Activated naive CD4-positive, alpha-beta T cell treated with anti-CD3 and anti-CD28 coated beads for 36 hours (primary cell): ENCODE measurements at regions of chr6 and their contacts with region 1.

Region 1: DNA sequence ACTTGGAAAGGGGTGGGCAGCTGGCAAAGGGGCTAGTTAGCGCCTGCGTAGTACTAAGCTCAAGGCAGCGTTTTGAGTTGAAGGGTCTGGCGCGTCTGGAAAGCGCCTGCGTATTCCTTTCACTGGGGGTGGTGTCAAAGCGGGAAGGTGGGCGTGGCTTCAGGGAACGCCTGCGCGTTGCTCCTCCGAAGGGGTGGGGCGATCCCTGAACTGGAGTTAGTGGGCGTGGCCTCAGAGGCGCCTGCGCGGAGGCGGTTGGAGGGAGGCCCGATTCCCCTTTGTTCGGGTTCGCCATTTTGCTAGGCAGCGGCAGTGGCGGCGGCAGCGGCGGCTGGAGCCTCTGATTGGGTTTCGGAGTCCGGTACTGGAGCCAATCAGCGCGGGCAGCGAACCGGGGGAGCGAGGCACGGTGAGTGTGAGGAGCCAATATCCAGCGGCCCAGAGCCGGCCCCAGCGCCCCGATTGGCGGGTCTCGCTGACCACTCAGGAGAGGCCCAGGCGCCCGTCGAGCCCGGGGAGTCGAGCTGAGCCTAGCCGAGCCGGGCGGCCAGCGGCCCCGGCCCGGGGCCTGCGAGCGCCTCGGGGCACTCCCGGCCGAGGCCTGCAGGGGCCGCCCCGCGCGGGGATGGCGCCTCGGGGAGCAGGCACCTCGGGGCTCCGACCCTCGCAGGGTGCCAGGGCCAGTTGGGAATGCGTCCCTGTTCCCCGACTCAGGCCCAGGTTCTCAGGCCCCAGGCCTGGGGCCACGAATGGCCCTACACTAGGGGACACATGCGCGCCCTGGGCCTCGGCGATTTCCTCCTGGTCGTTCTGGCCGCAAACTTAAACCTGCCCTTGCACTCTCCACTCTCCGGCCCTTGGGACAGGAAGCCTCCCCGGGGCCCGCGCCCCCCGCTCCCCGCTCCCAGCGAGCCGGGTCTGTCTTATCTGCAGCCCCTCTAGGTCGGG is at the start of gene NFYA:
- DNase-seq: peak; percentile 100
- H3K4me3 Mint-ChIP-seq: peak within 1 kb of the TSS; percentile 93
- H3K27ac Mint-ChIP-seq: peak within 1 kb of the TSS; percentile 98
- H3K4me1 Mint-ChIP-seq: peaks cover 50% of the 10 kb centered on the region
- H3K27me3 Mint-ChIP-seq: no peaks in the 10 kb centered on the region
- total RNA-seq, gene NFYA: 38.0 to 38.7 TPM

Region 2: GRCh38 chr6:39228992-39229767 is 1843.8 kb before region 1 on chr6 and contains the start of gene KCNK5:
- CTCF ChIA-PET with region 1: no interaction called
- intact Hi-C with region 1: loop called (anchors 1 kb)
- DNase-seq: peak; percentile 89
- H3K4me3 Mint-ChIP-seq: peak within 1 kb of the TSS; percentile 87
- H3K27ac Mint-ChIP-seq: peak within 1 kb of the TSS; percentile 87
- H3K4me1 Mint-ChIP-seq: peaks cover 44% of the 10 kb centered on the region
- H3K27me3 Mint-ChIP-seq: peaks cover 1% of the 10 kb centered on the region
- total RNA-seq, gene KCNK5: 9.0 to 9.2 TPM

Region 3: DNA sequence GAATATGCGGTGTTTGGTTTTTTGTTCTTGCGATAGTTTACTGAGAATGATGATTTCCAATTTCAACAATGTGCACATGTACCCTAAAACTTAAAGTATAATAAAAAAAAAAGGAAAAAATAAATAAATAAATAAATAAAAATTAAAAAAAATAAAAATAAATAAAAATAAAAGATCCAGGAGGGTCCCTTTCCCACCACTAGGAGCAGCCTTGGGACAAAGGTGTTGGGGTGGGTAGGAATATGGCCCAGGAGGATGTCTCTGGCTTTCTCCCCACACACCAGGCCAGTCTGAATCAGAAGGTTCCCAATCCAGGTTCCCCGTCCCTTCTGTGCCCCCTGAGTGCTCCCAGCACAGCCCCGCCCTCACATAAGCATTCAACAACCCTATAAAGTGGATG is 495.3 kb before region 1 on chr6:
- CTCF ChIA-PET with region 1: no interaction called
- intact Hi-C with region 1: no loop called
- DNase-seq: no peak
- H3K4me3 Mint-ChIP-seq: no peak overlapping the region
- H3K27ac Mint-ChIP-seq: no peak overlapping the region
- H3K4me1 Mint-ChIP-seq: no peaks in the 10 kb centered on the region
- H3K27me3 Mint-ChIP-seq: no peaks in the 10 kb centered on the region

Region 4: GRCh38 chr6:41182069-41183034 is 109.4 kb after region 1 on chr6:
- CTCF ChIA-PET with region 1: interaction called, 6 read pairs
- intact Hi-C with region 1: loop called (anchors 1 kb)
- DNase-seq: peak; percentile 74
- H3K4me3 Mint-ChIP-seq: no peak overlapping the region
- H3K27ac Mint-ChIP-seq: no peak overlapping the region
- H3K4me1 Mint-ChIP-seq: peaks cover 24% of the 10 kb centered on the region
- H3K27me3 Mint-ChIP-seq: no peaks in the 10 kb centered on the region

Region 5: DNA sequence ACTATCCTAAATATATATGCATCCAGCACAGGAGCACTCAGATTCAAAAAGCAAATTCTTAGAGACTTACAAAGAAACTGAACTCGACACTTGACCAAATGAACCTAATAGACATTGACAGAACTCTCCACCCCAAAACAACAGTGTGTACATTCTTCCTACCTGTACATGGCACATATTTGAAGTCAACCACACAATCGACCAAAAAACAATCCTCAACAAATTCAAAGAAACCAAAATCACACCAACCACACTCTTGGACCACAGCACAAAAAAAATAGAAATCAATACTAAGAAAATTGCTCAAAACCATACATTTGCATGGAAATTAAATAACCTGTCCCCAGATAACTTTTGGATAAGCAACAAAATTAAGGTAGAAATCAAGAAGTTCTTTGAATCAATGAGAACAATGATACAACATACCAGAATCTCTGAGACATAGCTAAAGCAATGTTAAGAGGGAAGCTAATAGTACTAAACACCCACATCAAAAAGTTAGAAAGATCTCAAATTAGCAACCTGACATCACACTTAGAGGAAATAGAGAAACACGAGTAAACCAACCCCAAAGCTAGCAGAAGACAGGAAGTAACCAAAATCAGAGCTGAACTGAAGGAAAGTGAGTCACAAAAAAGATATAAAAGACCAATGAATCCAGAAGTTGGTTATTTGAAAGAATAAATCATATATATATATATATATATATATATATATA is 226.0 kb after region 1 on chr6:
- CTCF ChIA-PET with region 1: interaction called, 3 read pairs
- intact Hi-C with region 1: loop called (anchors 2 kb)
- DNase-seq: no peak
- H3K4me3 Mint-ChIP-seq: peak overlapping the region; percentile 66
- H3K27ac Mint-ChIP-seq: peak overlapping the region; percentile 91
- H3K4me1 Mint-ChIP-seq: peaks cover 76% of the 10 kb centered on the region
- H3K27me3 Mint-ChIP-seq: no peaks in the 10 kb centered on the region

Region 6: GRCh38 chr6:41531591-41532582 is 458.9 kb after region 1 on chr6:
- CTCF ChIA-PET with region 1: no interaction called
- intact Hi-C with region 1: loop called (anchors 1 kb)
- DNase-seq: peak; percentile 87
- H3K4me3 Mint-ChIP-seq: peak overlapping the region; percentile 73
- H3K27ac Mint-ChIP-seq: peak overlapping the region; percentile 94
- H3K4me1 Mint-ChIP-seq: peaks cover 39% of the 10 kb centered on the region
- H3K27me3 Mint-ChIP-seq: peaks cover 10% of the 10 kb centered on the region

Region 7: GRCh38 chr6:41920921-41921711 is 848.2 kb after region 1 on chr6 and contains the starts of genes BYSL and MED20:
- CTCF ChIA-PET with region 1: no interaction called
- intact Hi-C with region 1: no loop called
- DNase-seq: peak; percentile 97
- H3K4me3 Mint-ChIP-seq: peak within 1 kb of the TSS; percentile 91
- H3K27ac Mint-ChIP-seq: peak within 1 kb of the TSS; percentile 97
- H3K4me1 Mint-ChIP-seq: peaks cover 54% of the 10 kb centered on the region
- H3K27me3 Mint-ChIP-seq: no peaks in the 10 kb centered on the region
- total RNA-seq, gene BYSL: 49.8 TPM
- total RNA-seq, gene MED20: 24.0 to 27.4 TPM

Region 8: GRCh38 chr6:42402184-42402583 is 1329.2 kb after region 1 on chr6:
- CTCF ChIA-PET with region 1: no interaction called
- intact Hi-C with region 1: no loop called
- DNase-seq: peak; percentile 85
- H3K4me3 Mint-ChIP-seq: no peak overlapping the region
- H3K27ac Mint-ChIP-seq: peak overlapping the region; percentile 50
- H3K4me1 Mint-ChIP-seq: peaks cover 65% of the 10 kb centered on the region
- H3K27me3 Mint-ChIP-seq: no peaks in the 10 kb centered on the region